ENCODE measurements at regions of chr11 and their contacts with region 1.

Region 1: GRCh38 chr11:113896156-113896879 is 8.3 kb upstream of the HTR3B start:
- DNase-seq: no peak
- H3K4me3 ChIP-seq: no peak overlapping the region
- H3K27ac ChIP-seq: no peak overlapping the region
- H3K4me1 ChIP-seq: no peaks in the 10 kb centered on the region
- H3K27me3 ChIP-seq: no peaks in the 10 kb centered on the region
- CTCF ChIP-seq: peak; percentile 68 to 74

Region 2: DNA sequence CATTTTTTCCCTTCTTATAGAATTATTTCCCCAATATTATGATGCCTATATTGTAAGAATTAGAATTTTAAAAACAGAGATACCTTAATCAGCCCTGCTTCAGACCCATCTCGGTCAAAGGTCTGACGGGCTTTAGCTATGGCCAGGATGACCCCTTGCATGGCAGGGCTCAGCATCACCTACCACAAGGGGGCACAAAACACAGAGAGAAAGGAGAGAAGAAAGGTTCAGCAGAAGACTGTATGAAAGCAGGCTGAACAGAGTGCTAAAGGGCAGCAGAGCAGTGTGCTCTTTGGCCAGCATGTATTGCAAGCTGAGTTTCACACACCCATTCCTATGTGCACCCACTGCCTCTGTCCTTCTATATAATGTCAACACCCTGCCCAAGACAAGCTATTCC is 89.9 kb before region 1 on chr11:
- CTCF ChIA-PET with region 1: no interaction called
- dilution Hi-C with region 1: no loop called
- in situ Hi-C with region 1: no loop called
- intact Hi-C with region 1: no loop called
- DNase-seq: peak; percentile 21
- H3K4me3 ChIP-seq: no peak overlapping the region
- H3K27ac ChIP-seq: no peak overlapping the region
- H3K4me1 ChIP-seq: no peaks in the 10 kb centered on the region
- H3K27me3 ChIP-seq: no peaks in the 10 kb centered on the region
- CTCF ChIP-seq: peak; percentile 48 to 59

Region 3: GRCh38 chr11:113947994-113948393 is 51.7 kb after region 1 on chr11:
- CTCF ChIA-PET with region 1: no interaction called
- dilution Hi-C with region 1: no loop called
- in situ Hi-C with region 1: no loop called
- intact Hi-C with region 1: no loop called
- DNase-seq: no peak
- H3K4me3 ChIP-seq: no peak overlapping the region
- H3K27ac ChIP-seq: no peak overlapping the region
- H3K4me1 ChIP-seq: no peaks in the 10 kb centered on the region
- H3K27me3 ChIP-seq: peaks cover 2% of the 10 kb centered on the region
- CTCF ChIP-seq: no peak

Region 4: DNA sequence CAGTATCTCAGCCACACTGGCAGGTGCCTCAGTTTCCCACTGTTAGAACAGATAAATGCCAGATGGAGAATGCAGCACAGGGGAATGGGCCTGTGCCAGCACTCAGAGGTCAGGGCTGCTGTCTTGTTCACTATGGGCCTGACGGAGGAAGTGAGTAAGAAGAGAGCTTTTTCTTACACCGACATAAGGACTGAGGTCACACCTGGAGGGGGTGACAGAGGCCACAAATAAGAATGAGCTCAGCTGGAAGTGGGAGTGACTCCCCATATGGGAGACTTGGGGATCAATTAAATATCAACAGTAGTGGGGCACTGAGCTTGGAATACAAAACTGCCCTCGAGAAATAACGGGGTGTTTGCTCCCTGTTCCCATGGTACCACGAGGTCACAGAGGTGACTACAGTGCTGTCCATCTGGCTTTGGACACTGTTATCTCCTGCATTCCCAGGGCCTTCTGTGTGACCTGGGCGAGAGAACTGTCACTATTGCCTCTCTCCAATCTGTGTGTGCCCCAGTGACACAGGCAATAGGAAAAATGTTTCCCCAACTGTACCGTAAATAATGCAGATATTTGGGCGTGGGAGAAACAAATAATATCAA is 305.8 kb after region 1 on chr11:
- CTCF ChIA-PET with region 1: no interaction called
- dilution Hi-C with region 1: loop called (anchors 5 kb)
- in situ Hi-C with region 1: no loop called
- intact Hi-C with region 1: no loop called
- DNase-seq: no peak
- H3K4me3 ChIP-seq: no peak overlapping the region
- H3K27ac ChIP-seq: no peak overlapping the region
- H3K4me1 ChIP-seq: peaks cover 5% of the 10 kb centered on the region
- H3K27me3 ChIP-seq: no peaks in the 10 kb centered on the region
- CTCF ChIP-seq: no peak

Region 5: GRCh38 chr11:114472661-114473060 is 576.3 kb after region 1 on chr11:
- CTCF ChIA-PET with region 1: no interaction called
- dilution Hi-C with region 1: no loop called
- in situ Hi-C with region 1: no loop called
- intact Hi-C with region 1: no loop called
- DNase-seq: no peak
- H3K4me3 ChIP-seq: no peak overlapping the region
- H3K27ac ChIP-seq: no peak overlapping the region
- H3K4me1 ChIP-seq: no peaks in the 10 kb centered on the region
- H3K27me3 ChIP-seq: no peaks in the 10 kb centered on the region
- CTCF ChIP-seq: no peak